Cardiac septum (tissue), 1 donor: ENCODE measurements at regions of chr13 and their contacts with region 1.

Region 1: GRCh38 chr13:31174018-31174417 is 12.3 kb upstream of the HSPH1 start:
- DNase-seq: no peak

Region 2: DNA sequence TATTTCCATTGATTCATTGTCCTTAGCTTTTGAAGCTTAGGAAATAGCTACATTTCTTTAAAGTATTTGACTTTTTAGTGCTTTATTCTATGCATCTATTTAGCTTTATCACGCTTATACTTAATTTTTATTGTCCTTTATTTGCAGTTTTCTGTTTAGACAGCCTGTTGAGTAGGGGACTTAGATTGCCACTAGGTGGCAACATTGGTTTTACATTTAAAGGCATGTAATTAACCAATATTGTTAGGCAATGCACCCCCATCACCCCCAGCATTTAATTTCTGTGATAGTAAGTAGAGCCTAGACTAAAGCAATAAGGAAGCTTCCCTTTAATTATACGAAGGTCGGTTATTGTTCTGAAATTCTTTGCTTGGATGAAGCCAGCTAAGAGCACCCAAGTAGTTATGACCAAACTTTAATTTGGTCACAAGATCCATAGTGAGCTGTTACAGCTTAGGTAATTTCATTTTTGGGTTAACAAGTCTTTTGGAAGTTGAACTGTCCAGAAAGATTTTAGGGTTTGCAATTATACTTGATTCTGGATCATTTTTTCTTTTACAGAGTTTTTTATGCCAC is 62.3 kb after region 1 on chr13:
- intact Hi-C with region 1: loop called (anchors 2 kb)
- DNase-seq: no peak